HCT116 (cell line): ENCODE measurements at regions of chr2 and their contacts with region 1.

Region 1: DNA sequence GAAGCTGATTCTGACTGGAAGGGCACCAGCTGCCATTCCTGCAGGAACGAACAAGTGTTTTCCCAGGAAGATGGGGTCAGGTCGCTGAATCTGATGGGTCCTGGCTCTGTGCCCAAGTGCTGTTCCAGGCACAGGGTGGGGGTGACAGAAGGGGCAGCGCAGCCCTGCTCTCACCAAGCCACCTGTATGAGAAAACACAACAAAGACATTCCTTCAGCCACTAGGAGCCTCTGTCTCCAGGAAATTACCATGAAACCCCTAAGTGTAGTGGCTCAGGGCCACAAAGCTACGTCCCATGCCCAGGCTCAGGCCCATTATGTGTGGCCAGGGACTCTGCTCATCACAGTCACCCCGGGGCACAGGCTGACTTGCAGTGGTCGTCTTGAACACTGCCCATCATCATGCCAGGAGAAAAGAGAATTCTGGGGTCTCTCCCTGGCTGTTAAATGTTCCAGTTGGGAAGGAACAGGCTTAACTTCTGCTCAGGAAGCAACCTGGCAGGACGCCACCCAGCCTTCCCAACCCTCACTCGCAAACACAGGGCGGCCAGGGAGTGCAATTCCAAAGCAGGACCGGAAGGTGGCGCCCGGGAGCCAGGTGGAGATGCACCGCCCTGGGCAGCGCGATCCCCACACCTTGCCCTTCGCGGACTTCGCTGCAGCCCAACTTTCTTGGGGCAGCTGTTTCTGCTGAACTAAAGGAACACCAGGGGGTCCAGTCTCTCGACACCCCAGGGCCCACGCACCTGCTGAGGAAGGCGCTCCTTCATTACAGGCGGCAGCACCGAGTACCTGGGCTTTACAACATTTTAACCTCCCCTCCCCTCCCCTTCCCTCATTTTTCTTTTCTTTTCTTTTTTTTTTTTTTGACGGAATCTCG is 11.0 kb upstream of the SFTPB start:
- DNase-seq: peak; percentile 50
- ATAC-seq: peak; percentile 96
- H3K4me3 ChIP-seq: peak overlapping the region; percentile 31 to 46
- H3K27ac ChIP-seq: no peak overlapping the region; the same call in 1 of the 2 replicates
- H3K4me1 ChIP-seq: peaks cover 13 to 31% of the 10 kb centered on the region in 2 experiments
- H3K27me3 ChIP-seq: no peaks in the 10 kb centered on the region
- CTCF ChIP-seq: peak; percentile 90 to 96 (median 94)
- POLR2A ChIP-seq: no peak
- RAD21 ChIP-seq: peak; percentile 92

Region 2: GRCh38 chr2:85707304-85707703 is 28.3 kb after region 1 on chr2:
- CTCF ChIA-PET with region 1: interaction called, 33 read pairs
- POLR2A ChIA-PET with region 1: interaction called, 3 read pairs
- RAD21 ChIA-PET with region 1: no interaction called
- intact Hi-C with region 1: loop called (anchors 1 kb)
- DNase-seq: peak; percentile 89
- ATAC-seq: peak; percentile 93
- H3K4me3 ChIP-seq: no peak overlapping the region; a peak in 1 of 4 replicates
- H3K27ac ChIP-seq: no peak overlapping the region
- H3K4me1 ChIP-seq: peaks cover 8 to 26% of the 10 kb centered on the region in 2 experiments
- H3K27me3 ChIP-seq: no peaks in the 10 kb centered on the region
- CTCF ChIP-seq: peak; percentile 81 to 95 (median 92)
- POLR2A ChIP-seq: no peak
- RAD21 ChIP-seq: peak; percentile 83